ENCODE measurements at regions of chr4 and their contacts with region 1.

Region 1: DNA sequence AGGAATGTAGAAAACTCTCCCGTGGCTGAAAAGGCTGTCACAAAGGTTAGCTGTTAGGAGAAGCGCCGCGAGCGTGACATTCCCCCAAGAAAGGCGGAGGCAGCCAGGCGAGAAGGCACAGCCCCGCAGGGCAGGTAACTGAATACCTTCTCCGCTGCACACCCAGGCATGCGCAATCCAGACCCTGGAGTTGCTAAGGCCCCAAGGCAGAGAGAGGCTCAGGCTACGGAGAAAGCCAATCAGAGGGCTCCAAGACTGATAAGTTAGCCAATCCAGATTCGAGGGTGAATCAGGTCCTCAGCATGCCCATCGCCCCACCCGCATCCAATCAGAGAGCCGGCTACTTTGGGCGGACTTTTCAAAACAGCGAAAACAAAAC is 485 bp upstream of the CCNG2 start:
- DNase-seq: peak; percentile 97
- ATAC-seq: peak; percentile 83
- H3K4me3 ChIP-seq: peak overlapping the region; percentile 78
- H3K27ac ChIP-seq: peak overlapping the region; percentile 53
- H3K4me1 ChIP-seq: peaks cover 29% of the 10 kb centered on the region
- H3K27me3 ChIP-seq: no peaks in the 10 kb centered on the region
- CTCF ChIP-seq: no peak

Region 2: DNA sequence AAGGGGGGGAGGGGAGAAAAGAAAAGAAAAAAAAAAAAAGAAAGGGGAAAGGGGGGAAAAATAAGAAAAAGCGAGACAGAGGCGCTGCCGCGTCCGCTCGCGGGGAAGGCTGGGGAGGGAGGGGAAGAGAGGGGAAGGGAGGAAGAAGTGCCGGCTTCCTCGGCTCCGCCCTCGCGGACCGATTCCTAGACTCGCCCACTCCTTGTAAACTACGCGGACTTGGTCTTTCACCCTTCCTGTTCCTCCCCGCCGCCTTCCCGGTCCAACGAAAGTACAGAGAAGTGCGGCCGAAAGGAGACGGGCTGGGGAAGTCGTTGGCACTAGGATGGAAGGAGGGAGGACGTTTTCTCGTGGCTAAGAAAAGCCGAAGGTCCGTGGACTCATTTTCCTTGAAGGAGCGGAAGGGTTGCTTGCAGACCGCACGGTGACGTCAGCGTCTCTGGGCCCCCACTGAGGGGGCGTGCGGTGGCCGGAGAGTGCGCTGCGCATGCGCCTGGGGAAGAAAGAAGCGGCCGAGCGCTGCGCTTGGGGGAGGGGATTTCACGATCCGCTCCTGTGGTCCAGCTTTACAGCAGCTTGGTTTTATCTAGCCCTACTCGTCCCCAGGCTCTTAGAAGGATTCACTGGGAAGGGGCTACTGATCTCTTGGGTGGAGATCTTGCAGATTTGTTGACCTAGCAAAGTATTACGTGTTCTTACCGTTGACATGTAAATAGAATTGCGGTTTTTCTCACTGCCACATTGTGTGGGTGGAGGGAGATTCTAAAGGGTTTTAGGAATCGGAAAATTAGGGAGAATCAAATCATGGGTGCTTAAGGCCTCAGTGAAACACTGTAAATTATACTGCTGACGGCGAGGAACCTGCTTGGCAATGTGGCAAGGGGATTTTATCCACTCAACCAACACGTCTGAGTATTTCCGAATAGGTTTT is 80.4 kb before region 1 on chr4 and contains the start of gene CCNI:
- CTCF ChIA-PET with region 1: no interaction called
- POLR2A ChIA-PET with region 1: no interaction called
- intact Hi-C with region 1: loop called (anchors 1 kb)
- DNase-seq: peak; percentile 91
- ATAC-seq: peak; percentile 62
- H3K4me3 ChIP-seq: peak within 1 kb of the TSS; percentile 94
- H3K27ac ChIP-seq: peak within 1 kb of the TSS; percentile 96
- H3K4me1 ChIP-seq: peaks cover 25% of the 10 kb centered on the region
- H3K27me3 ChIP-seq: no peaks in the 10 kb centered on the region
- CTCF ChIP-seq: no peak
- total RNA-seq, gene CCNI: 60.1 and 73.5 TPM in 2 replicates

Region 3: GRCh38 chr4:77095101-77095821 is 61.3 kb before region 1 on chr4:
- CTCF ChIA-PET with region 1: no interaction called
- POLR2A ChIA-PET with region 1: interaction called, 3 read pairs
- intact Hi-C with region 1: loop called (anchors 1 kb)
- DNase-seq: peak; percentile 62
- ATAC-seq: peak; percentile 94
- H3K4me3 ChIP-seq: no peak overlapping the region
- H3K27ac ChIP-seq: no peak overlapping the region
- H3K4me1 ChIP-seq: peaks cover 15% of the 10 kb centered on the region
- H3K27me3 ChIP-seq: no peaks in the 10 kb centered on the region
- CTCF ChIP-seq: peak; percentile 81

Region 4: GRCh38 chr4:77203380-77204197 is 47.1 kb after region 1 on chr4:
- CTCF ChIA-PET with region 1: no interaction called
- POLR2A ChIA-PET with region 1: no interaction called
- intact Hi-C with region 1: loop called (anchors 2 kb)
- DNase-seq: peak; percentile 79
- ATAC-seq: peak; percentile 42
- H3K4me3 ChIP-seq: no peak overlapping the region
- H3K27ac ChIP-seq: peak overlapping the region; percentile 98
- H3K4me1 ChIP-seq: peaks cover 32% of the 10 kb centered on the region
- H3K27me3 ChIP-seq: no peaks in the 10 kb centered on the region
- CTCF ChIP-seq: peak; percentile 80